Endothelial cell of umbilical vein (primary cell): ENCODE measurements at regions of chr4 and their contacts with region 1.

Region 1: GRCh38 chr4:74320559-74321118 is 12.4 kb downstream of the EPGN start:
- DNase-seq: peak; percentile 74
- H3K4me3 ChIP-seq: no peak overlapping the region
- H3K27ac ChIP-seq: no peak overlapping the region
- H3K4me1 ChIP-seq: no peaks in the 10 kb centered on the region
- H3K27me3 ChIP-seq: no peaks in the 10 kb centered on the region
- CTCF ChIP-seq: peak; percentile 44
- POLR2A ChIP-seq: no peak

Region 2: DNA sequence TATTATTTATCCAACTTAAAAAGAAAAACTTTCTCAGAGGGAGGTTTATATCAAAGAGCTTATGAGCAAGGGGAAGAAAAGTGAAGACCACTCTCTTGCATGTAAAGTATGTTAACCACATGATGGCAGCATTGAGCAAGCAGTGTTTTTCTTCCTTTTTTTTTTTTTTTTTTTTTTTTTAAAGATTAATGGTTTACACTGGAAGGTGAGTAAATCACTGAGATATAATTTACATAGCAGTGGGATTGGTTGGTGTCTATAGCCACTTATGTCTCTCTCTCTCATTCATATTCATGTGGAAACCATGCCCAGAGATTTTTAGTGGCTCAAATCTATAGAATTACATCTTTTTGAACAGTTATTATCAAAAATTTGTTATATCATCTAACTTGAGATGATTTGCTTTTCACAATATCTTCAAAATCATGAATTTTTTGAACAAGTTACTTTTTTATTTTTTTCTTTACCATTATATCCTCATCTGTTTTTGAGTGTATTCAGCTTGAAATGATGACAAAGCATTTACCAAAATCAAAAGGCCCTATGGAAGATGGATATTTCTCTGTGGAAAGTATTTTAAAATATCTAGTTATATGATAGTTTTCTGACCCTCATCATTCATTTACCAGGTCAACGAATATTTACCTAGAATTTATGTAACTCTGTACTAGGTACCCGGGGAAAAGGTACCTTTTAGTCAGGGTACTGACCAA is 131.2 kb before region 1 on chr4:
- CTCF ChIA-PET with region 1: interaction called, 37 read pairs
- POLR2A ChIA-PET with region 1: no interaction called
- dilution Hi-C with region 1: no loop called
- intact Hi-C with region 1: no loop called
- DNase-seq: peak; percentile 66
- H3K4me3 ChIP-seq: no peak overlapping the region
- H3K27ac ChIP-seq: no peak overlapping the region
- H3K4me1 ChIP-seq: no peaks in the 10 kb centered on the region
- H3K27me3 ChIP-seq: no peaks in the 10 kb centered on the region
- CTCF ChIP-seq: peak; percentile 37 to 63
- POLR2A ChIP-seq: no peak

Region 3: GRCh38 chr4:74364652-74365491 is 44.2 kb after region 1 on chr4 and contains the start of gene EREG:
- CTCF ChIA-PET with region 1: interaction called, 9 read pairs
- POLR2A ChIA-PET with region 1: no interaction called
- dilution Hi-C with region 1: no loop called
- intact Hi-C with region 1: loop called (anchors 2 kb)
- DNase-seq: peak; percentile 36
- H3K4me3 ChIP-seq: peak within 1 kb of the TSS; percentile 35 to 63 (median 38)
- H3K27ac ChIP-seq: no peak within 1 kb of the TSS
- H3K4me1 ChIP-seq: no peaks in the 10 kb centered on the region
- H3K27me3 ChIP-seq: no peaks in the 10 kb centered on the region
- CTCF ChIP-seq: no peak
- POLR2A ChIP-seq: no peak
- total RNA-seq, gene EREG: not detected in 2 replicates

Region 4: DNA sequence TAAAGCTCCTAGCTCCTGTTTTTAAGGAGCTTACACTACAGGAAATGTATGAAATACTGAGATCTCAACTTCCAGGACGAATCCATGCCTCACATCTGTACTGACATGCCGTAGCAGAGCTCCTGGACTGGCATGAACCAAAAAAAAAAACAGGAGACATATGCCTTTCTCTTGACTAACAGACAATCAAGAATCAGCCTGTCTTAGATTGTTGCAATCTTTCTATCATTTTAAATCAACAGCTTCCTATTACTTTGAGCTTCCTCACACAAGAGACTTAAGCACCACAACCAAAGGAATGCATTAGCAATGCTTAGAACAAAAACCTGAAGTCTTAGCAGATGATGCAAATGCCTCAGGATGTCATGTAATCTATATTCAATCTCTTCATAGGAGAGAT is 89.6 kb after region 1 on chr4:
- CTCF ChIA-PET with region 1: no interaction called
- POLR2A ChIA-PET with region 1: no interaction called
- dilution Hi-C with region 1: no loop called
- intact Hi-C with region 1: no loop called
- DNase-seq: no peak
- H3K4me3 ChIP-seq: no peak overlapping the region
- H3K27ac ChIP-seq: no peak overlapping the region
- H3K4me1 ChIP-seq: no peaks in the 10 kb centered on the region
- H3K27me3 ChIP-seq: no peaks in the 10 kb centered on the region
- CTCF ChIP-seq: no peak
- POLR2A ChIP-seq: no peak

Region 5: DNA sequence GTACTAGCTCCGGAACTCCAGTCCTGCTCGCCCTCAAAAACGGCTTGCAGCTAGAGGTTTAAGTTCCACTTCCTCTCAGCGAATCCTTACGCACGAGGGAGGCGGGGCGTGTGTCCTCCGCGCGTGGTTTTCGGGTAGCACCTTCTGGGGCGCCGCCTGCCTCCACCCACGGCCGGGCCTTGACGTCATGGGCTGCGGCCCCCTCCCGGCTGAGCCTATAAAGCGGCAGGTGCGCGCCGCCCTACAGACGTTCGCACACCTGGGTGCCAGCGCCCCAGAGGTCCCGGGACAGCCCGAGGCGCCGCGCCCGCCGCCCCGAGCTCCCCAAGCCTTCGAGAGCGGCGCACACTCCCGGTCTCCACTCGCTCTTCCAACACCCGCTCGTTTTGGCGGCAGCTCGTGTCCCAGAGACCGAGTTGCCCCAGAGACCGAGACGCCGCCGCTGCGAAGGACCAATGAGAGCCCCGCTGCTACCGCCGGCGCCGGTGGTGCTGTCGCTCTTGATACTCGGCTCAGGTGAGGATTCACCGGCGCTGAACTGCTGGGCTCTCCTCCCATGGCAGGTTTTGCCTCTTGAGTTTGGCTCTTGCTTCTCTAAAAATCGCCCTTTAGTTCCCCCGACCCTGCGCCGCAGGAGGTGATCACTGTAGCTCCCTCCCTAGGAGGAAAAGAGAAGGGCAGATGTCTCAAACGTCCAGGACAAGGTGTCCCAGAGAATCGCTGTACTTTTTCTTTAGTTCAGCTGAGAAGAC is 124.4 kb after region 1 on chr4 and contains the start of gene AREG:
- CTCF ChIA-PET with region 1: interaction called, 4 read pairs
- POLR2A ChIA-PET with region 1: no interaction called
- dilution Hi-C with region 1: no loop called
- intact Hi-C with region 1: loop called (anchors 5 kb)
- DNase-seq: peak; percentile 70
- H3K4me3 ChIP-seq: peak within 1 kb of the TSS; percentile 8 to 73 (median 45)
- H3K27ac ChIP-seq: no peak within 1 kb of the TSS
- H3K4me1 ChIP-seq: peaks cover 3% of the 10 kb centered on the region
- H3K27me3 ChIP-seq: no peaks in the 10 kb centered on the region
- CTCF ChIP-seq: peak; percentile 62
- POLR2A ChIP-seq: no peak
- total RNA-seq, gene AREG: 0.46 and 0.55 TPM in 2 replicates

Region 6: DNA sequence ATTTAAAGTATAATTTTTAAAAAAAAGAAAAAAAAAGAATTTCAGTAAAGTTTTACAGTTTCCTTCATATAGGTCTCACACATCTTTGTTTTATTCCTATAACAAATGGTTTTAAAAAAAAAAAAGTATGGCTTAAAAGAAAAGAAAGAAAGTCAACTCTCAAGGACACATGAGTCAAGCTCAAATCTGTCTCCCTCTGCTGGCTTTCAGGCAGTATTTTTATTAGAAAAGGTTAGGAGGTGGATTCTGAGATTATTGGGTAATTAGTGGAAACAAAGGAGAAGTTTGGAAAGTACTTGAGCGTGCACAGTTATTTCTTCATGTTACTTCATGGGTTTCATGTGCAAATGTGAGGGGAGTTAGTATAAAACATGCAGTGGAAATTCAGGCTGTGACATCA is 510.3 kb after region 1 on chr4:
- CTCF ChIA-PET with region 1: interaction called, 20 read pairs
- POLR2A ChIA-PET with region 1: no interaction called
- dilution Hi-C with region 1: no loop called
- intact Hi-C with region 1: no loop called
- DNase-seq: no peak
- H3K4me3 ChIP-seq: no peak overlapping the region
- H3K27ac ChIP-seq: no peak overlapping the region
- H3K4me1 ChIP-seq: no peaks in the 10 kb centered on the region
- H3K27me3 ChIP-seq: no peaks in the 10 kb centered on the region
- CTCF ChIP-seq: peak; percentile 14 to 17
- POLR2A ChIP-seq: no peak

Region 7: DNA sequence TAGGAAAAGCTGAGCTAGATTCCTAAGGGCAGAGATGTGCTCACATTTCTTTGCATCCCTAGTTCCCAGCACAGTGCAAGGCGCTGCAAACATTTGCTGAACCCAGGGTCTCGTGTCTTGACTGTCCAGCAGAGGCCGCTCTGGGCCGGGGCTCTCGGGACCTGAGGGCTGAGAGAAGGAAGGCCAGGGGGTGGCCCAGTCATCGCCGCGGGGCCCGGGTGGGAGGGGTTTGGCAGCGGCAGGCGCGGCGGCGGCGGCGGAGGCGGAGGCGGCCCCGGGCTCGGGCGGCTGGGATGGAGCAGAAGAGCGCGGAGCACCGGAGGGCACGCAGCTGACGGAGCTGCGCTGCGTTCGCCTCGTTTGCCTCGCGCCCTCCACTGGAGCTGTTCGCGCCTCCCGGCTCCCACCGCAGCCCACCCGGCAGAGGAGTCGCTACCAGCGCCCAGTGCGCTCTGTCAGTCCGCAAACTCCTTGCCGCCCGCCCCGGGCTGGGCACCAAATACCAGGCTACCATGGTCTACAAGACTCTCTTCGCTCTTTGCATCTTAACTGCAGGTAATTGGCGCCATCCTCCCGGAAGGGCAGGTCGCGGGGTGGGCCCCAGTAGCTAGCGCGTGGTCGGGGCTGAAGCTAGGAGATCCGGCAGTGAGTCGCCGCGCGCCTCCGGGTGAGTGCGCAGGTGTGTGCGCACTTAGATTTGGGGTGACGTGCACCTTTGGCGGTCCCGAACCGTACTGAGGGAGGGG is 612.4 kb after region 1 on chr4 and contains the start of gene PARM1:
- CTCF ChIA-PET with region 1: interaction called, 3 read pairs
- POLR2A ChIA-PET with region 1: no interaction called
- dilution Hi-C with region 1: no loop called
- intact Hi-C with region 1: loop called (anchors 10 kb)
- DNase-seq: peak; percentile 79
- H3K4me3 ChIP-seq: peak within 1 kb of the TSS; percentile 15 to 38 (median 33)
- H3K27ac ChIP-seq: no peak within 1 kb of the TSS
- H3K4me1 ChIP-seq: peaks cover 17% of the 10 kb centered on the region
- H3K27me3 ChIP-seq: peaks cover 35 to 44% of the 10 kb centered on the region in 2 experiments
- CTCF ChIP-seq: peak; percentile 59 to 81
- POLR2A ChIP-seq: no peak
- total RNA-seq, gene PARM1: not detected in 2 replicates